Ascending aorta (tissue), 2 donors: ENCODE measurements at regions of chr1 and their contacts with region 1.

Region 1: GRCh38 chr1:192808518-192809306 is at the start of gene RGS2:
- DNase-seq: peak; percentile 72 to 95
- H3K4me3 ChIP-seq: peak within 1 kb of the TSS; percentile 73 to 84
- H3K27ac ChIP-seq: peak within 1 kb of the TSS; percentile 86 to 90
- H3K4me1 ChIP-seq: no peaks in the 10 kb centered on the region
- H3K27me3 ChIP-seq: no peaks in the 10 kb centered on the region
- CTCF ChIP-seq: peak in 1 of 3 experiments; percentile 41
- total RNA-seq, gene RGS2: 11.9 TPM

Region 2: GRCh38 chr1:192700834-192701271 is 107.9 kb before region 1 on chr1:
- intact Hi-C with region 1: no loop called
- DNase-seq: no peak
- H3K4me3 ChIP-seq: no peak overlapping the region
- H3K27ac ChIP-seq: no peak overlapping the region
- H3K4me1 ChIP-seq: no peaks in the 10 kb centered on the region
- H3K27me3 ChIP-seq: no peaks in the 10 kb centered on the region
- CTCF ChIP-seq: no peak

Region 3: GRCh38 chr1:192793983-192794767 is 14.5 kb before region 1 on chr1:
- intact Hi-C with region 1: no loop called
- DNase-seq: no peak
- H3K4me3 ChIP-seq: no peak overlapping the region
- H3K27ac ChIP-seq: no peak overlapping the region
- H3K4me1 ChIP-seq: no peaks in the 10 kb centered on the region
- H3K27me3 ChIP-seq: no peaks in the 10 kb centered on the region
- CTCF ChIP-seq: no peak

Region 4: GRCh38 chr1:192826791-192827477 is 18.2 kb after region 1 on chr1:
- intact Hi-C with region 1: loop called (anchors 2 kb)
- DNase-seq: peak in 1 of 2 donors; percentile 70
- H3K4me3 ChIP-seq: no peak overlapping the region
- H3K27ac ChIP-seq: peak overlapping the region; percentile 41 to 59
- H3K4me1 ChIP-seq: peaks cover 0 to 11% of the 10 kb centered on the region in 2 donors
- H3K27me3 ChIP-seq: no peaks in the 10 kb centered on the region
- CTCF ChIP-seq: no peak

Region 5: DNA sequence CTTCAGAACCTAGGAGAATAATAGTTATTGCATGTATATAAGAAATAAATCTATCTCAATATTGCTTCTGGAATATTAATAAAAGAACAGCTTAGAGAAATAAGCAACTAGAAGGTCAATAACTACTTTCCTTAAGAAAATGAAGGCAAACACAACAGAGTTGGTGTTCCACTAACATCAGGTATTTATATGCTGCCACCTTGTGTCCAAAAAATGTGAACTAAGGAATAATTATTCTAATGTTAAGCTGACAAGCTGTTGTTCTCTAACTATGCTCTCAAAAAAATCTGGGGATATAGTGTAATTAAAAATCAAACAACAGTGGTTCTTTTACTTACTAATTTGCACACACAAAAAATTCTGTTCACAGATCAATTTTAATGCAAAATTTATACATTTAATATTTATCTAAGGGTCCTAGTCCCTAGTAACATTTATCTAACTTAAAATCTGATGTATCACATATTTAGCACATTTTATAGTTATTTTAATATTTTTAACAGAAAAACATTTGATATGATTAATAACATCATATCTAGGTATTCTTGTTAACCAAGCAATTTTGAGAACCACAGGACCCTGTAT is 210.8 kb after region 1 on chr1:
- intact Hi-C with region 1: loop called (anchors 1 kb)
- DNase-seq: no peak
- H3K4me3 ChIP-seq: no peak overlapping the region
- H3K27ac ChIP-seq: no peak overlapping the region
- H3K4me1 ChIP-seq: no peaks in the 10 kb centered on the region
- H3K27me3 ChIP-seq: no peaks in the 10 kb centered on the region
- CTCF ChIP-seq: peak in 2 of 3 experiments; percentile 49 to 59

Region 6: GRCh38 chr1:193104906-193105820 is 296.5 kb after region 1 on chr1 and contains the start of gene GLRX2:
- intact Hi-C with region 1: loop called (anchors 1 kb)
- DNase-seq: peak; percentile 39 to 92
- H3K4me3 ChIP-seq: peak within 1 kb of the TSS; percentile 93 to 98
- H3K27ac ChIP-seq: peak within 1 kb of the TSS; percentile 94 to 97
- H3K4me1 ChIP-seq: peaks cover 2 to 19% of the 10 kb centered on the region in 2 donors
- H3K27me3 ChIP-seq: no peaks in the 10 kb centered on the region
- CTCF ChIP-seq: no peak
- total RNA-seq, gene GLRX2: 2.8 TPM